ENCODE measurements at regions of chr17 and their contacts with region 1.

Region 1: DNA sequence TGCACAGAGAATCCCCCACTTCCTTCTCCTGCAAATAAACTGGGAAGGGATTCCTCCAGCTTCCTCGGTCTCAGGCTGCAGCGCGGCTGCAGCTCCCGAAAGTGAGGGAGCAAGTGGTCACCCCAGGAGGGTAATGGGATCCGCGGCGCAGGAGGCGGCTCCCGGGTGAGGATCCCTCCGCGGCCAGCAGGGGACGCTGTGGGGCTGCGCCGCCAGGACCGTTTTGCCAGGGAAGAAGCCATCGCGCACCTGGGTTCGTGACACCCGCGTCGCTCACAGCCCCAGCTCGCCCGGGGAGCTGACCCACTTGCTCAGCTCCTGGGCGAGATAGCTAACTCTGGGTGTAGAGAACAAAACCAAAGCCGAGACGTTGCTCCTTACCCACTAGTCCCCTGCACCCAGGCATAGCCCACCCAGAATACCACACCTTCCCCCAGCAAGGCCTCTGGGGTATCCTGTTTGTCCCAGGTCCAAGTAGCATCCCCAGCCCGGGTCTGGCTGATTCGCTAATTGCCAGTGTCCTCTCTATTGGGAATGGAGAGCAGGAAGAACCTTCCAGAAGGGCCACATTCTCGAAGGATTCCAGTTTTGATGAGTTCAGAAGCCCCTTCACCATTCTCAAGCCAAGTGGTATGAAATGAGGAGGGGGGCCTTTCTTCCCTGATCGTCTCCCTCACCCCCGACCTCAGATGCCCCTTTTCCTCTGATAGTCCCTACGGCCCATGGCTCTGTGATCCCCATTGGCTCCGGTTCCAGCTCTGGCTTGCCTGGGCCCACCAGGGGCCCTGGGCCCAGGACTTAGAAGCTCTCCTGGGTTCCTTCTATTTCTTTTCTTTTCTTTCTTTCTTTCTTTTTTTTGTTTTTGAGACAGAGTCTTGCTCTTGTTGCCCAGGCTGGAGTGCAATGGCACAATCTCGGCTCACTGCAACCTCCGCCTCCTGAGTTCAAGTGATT is 14.1 kb downstream of the CYGB start:
- DNase-seq: peak; percentile 58 to 86 (median 75)
- H3K4me3 ChIP-seq: no peak overlapping the region
- H3K27ac ChIP-seq: no peak overlapping the region
- H3K4me1 ChIP-seq: peaks cover 11 to 27% of the 10 kb centered on the region in 2 donors
- H3K27me3 ChIP-seq: no peaks in the 10 kb centered on the region
- CTCF ChIP-seq: peak; percentile 98 to 100 (median 100)
- POLR2A ChIP-seq: no peak

Region 2: DNA sequence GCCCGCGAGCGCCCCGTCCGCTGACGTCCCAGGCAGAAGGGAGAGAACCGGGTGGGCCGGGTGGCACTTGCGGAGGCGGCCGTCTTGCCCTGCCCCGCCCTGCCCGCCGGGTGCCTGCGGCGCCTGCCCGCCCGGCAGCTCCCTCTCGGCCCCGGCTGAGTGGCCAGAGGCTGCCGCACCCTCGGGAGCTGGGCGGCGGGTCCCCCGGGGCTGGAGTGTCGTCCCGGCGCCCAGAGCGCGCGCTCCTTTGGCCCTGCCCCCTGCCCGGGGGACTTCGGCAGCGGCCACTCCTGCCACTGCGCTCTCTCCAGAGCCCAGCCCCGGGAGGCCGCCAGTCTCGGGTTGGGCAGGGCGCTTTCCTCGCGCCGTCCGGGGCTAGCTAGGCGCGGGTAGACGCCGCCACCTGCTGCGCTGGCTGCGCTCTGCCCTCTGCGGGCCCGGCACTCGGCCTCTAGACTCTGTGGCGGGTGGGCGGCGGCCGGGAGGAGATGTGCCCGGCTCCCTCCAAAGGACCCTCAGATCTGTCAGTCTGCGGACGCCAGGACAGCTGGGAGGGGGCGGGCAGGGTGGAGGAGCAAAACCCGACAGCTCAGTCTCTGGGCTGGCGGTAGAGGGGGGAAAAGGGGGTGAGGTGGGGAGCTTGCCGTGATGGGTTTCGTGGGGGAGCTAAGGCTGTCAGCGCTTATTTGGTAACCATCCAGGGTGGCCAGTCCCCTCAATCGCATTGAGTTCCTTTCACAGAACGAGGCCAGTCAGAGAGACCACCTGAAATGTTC is 62.6 kb after region 1 on chr17 and contains the start of gene ST6GALNAC2:
- intact Hi-C with region 1: loop called (anchors 5 to 10 kb)
- DNase-seq: peak; percentile 73 to 82 (median 75)
- H3K4me3 ChIP-seq: peak within 1 kb of the TSS in 3 of 4 donors; percentile 25 to 77 (median 57)
- H3K27ac ChIP-seq: peak within 1 kb of the TSS in 3 of 5 donors; percentile 16 to 61 (median 30)
- H3K4me1 ChIP-seq: peaks cover 0 to 13% of the 10 kb centered on the region in 2 donors
- H3K27me3 ChIP-seq: no peaks in the 10 kb centered on the region
- CTCF ChIP-seq: peak; percentile 20 to 67 (median 50)
- POLR2A ChIP-seq: peak in 1 of 2 donors; percentile 63
- total RNA-seq, gene ST6GALNAC2: 0.50 to 37.8 (median 6.0) TPM

Region 3: GRCh38 chr17:76623271-76624146 is 100.1 kb after region 1 on chr17:
- intact Hi-C with region 1: loop called (anchors 5 to 10 kb)
- DNase-seq: peak; percentile 72 to 89 (median 82)
- H3K4me3 ChIP-seq: no peak overlapping the region
- H3K27ac ChIP-seq: peak overlapping the region in 2 of 5 donors; percentile 29 to 50
- H3K4me1 ChIP-seq: peaks cover 6 to 7% of the 10 kb centered on the region in 2 donors
- H3K27me3 ChIP-seq: no peaks in the 10 kb centered on the region
- CTCF ChIP-seq: peak; percentile 85 to 97 (median 91)
- POLR2A ChIP-seq: no peak

Measured in adrenal gland (tissue), 19 donors.